Activated CD4-positive, alpha-beta T cell treated with anti-CD3 and anti-CD28 coated beads for 36 hours (primary cell): ENCODE measurements at regions of chr9 and their contacts with region 1.

Region 1: DNA sequence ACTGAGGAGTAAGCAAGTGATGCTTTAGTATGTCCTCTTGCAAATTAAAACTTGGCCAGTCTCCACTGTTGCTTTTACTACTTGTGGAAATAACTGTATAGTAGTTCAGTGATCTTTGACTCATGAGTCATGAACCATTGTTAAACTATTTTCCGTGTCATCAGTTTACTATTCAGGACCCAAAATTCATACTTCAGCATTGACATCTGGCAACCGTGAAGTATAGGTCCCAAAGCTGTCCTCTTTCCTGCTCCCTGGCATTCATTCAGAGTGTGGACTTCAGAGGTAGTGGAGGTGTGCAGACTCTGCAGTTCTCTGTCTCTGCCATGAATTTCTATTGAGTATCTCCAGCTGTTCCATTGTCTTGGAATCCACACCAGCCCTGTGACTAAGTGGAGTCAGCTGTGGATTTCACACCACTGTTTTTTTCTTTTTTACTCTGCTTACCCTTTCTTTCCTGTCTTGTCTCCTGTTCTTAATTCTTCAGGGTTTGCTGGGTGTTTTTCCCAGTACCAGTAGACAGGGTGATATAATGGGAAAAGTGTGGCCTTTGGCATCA is 7.5 kb downstream of the TDRD7 start:
- DNase-seq: no peak
- ATAC-seq: no peak
- H3K4me3 Mint-ChIP-seq: no peak overlapping the region
- H3K27ac Mint-ChIP-seq: no peak overlapping the region
- H3K4me1 Mint-ChIP-seq: peaks cover 14% of the 10 kb centered on the region
- H3K27me3 Mint-ChIP-seq: no peaks in the 10 kb centered on the region

Region 2: DNA sequence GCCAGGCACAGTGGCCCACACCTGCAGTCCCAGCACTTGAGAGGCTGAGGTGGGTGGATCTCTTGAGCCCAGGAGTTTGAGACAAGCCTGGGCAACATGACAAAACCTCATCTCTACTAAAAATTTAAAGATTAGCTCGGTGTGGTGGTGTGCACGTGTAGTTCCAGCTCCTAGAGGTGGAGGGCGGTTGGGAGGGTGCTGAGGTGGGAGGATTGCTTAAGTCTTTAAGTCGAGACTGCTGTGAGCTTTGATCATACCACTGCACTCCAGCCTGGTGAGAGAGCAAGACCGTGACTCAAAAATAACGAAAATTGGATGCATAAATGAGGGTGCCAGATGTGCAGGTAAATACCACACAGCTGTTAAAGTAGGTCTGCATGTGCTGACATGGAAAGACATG is 46.8 kb before region 1 on chr9:
- CTCF ChIA-PET with region 1: no interaction called
- POLR2A ChIA-PET with region 1: no interaction called
- intact Hi-C with region 1: loop called in 1 of 2 experiments (anchors 5 kb)
- DNase-seq: no peak
- ATAC-seq: no peak
- H3K4me3 Mint-ChIP-seq: no peak overlapping the region
- H3K27ac Mint-ChIP-seq: no peak overlapping the region
- H3K4me1 Mint-ChIP-seq: peaks cover 2% of the 10 kb centered on the region
- H3K27me3 Mint-ChIP-seq: no peaks in the 10 kb centered on the region

Region 3: GRCh38 chr9:97531888-97532376 is 112.5 kb after region 1 on chr9:
- CTCF ChIA-PET with region 1: no interaction called
- POLR2A ChIA-PET with region 1: no interaction called
- intact Hi-C with region 1: no loop called
- DNase-seq: no peak
- ATAC-seq: no peak
- H3K4me3 Mint-ChIP-seq: no peak overlapping the region
- H3K27ac Mint-ChIP-seq: no peak overlapping the region
- H3K4me1 Mint-ChIP-seq: peaks cover 5% of the 10 kb centered on the region
- H3K27me3 Mint-ChIP-seq: no peaks in the 10 kb centered on the region

Region 4: GRCh38 chr9:97728256-97728655 is 308.9 kb after region 1 on chr9:
- CTCF ChIA-PET with region 1: no interaction called
- POLR2A ChIA-PET with region 1: no interaction called
- intact Hi-C with region 1: no loop called
- DNase-seq: no peak
- ATAC-seq: no peak
- H3K4me3 Mint-ChIP-seq: no peak overlapping the region
- H3K27ac Mint-ChIP-seq: no peak overlapping the region
- H3K4me1 Mint-ChIP-seq: no peaks in the 10 kb centered on the region
- H3K27me3 Mint-ChIP-seq: peaks cover 5% of the 10 kb centered on the region